CD8-positive, alpha-beta T cell (primary cell): ENCODE measurements at regions of chr19 and their contacts with region 1.

Region 1: DNA sequence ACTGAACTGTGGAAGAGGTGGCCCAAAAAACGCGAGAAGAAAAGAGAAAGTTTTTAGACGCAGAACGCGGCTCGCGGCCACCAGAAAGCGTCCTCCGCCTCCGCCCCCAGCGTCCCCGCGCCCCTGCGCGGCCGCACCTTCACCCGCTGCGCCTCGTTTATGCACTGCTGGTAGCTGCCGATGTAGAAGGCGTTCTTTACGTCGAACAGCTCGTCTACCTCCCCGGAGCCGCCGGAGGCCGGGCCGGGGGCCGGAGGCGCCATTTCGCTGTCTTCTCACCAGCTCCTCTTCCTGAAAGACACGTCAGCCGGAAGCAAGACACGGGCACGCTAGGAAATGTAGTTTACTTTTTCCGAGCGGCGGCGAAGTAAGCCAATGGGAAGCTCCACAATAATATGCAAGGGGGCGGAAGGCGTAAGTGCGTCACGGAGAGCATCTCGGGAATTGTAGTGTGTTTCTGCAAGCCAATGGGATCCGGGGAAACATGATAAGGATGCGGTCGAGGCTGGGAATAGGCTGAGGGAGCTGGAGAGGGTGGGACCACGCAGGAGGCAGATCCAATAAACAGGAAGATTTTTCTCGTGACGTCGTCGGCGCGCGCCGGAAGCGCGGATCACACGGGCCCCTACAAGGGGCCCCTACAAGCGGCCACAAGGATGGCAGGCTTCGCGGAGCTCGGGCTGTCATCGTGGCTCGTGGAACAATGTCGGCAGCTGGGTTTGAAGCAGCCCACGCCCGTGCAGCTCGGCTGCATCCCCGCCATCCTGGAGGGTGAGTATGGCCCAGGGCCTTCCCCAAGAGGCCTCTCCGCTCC is at the starts of genes COPE and DDX49:
- DNase-seq: peak; percentile 92 to 100 (median 98)
- ATAC-seq: peak; percentile 93
- H3K4me3 ChIP-seq: peak within 1 kb of the TSS; percentile 92 to 94
- H3K4me3 Mint-ChIP-seq: peak within 1 kb of the TSS; percentile 93
- H3K27ac ChIP-seq: peak within 1 kb of the TSS; percentile 96 to 97
- H3K27ac Mint-ChIP-seq: peak within 1 kb of the TSS; percentile 94
- H3K4me1 ChIP-seq: peaks cover 30% of the 10 kb centered on the region
- H3K4me1 Mint-ChIP-seq: peaks cover 43% of the 10 kb centered on the region
- H3K27me3 ChIP-seq: no peaks in the 10 kb centered on the region
- H3K27me3 Mint-ChIP-seq: no peaks in the 10 kb centered on the region
- CTCF ChIP-seq: no peak
- total RNA-seq, gene COPE: 207 to 211 TPM
- total RNA-seq, gene DDX49: 67.1 to 72.8 TPM

Region 2: DNA sequence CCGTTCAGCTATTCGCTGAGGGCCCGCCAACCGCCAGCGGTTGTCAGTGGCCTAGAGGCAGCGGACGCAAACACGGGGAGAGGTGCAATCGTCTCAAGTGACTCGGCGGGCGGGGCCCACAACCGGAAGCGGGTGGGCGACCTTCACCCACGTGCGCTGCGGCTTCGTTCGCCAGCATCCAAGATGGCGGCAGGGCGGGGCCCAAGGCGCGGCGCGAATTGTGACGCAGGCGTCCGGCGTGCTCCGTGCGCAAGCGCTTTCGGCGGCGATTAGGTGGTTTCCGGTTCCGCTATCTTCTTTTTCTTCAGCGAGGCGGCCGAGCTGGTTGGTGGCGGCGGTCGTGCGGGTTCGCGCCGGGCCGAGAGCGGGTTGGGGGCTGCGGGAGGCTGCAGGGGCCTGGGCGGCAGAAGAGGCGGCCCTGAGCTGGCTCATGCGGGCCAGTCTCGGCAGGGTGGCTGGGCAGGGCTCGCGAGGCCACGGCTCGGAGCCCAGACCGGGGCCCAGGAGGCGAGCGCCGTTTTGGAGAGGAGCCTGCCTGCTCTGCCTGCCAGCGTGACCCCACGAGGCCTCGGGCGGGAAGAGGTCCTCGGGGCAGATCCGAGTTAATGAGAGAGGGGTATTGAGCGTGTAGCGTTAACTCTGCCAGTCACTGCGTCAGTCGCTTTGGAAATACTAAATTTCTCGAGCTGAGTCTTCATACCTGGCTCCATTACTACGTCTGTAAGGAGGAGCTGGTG is 347.6 kb before region 1 on chr19 and contains the start of gene UBA52:
- CTCF ChIA-PET with region 1: no interaction called
- POLR2A ChIA-PET with region 1: interaction called, 9 read pairs
- intact Hi-C with region 1: loop called (anchors 1 kb)
- DNase-seq: peak; percentile 98 to 100 (median 99)
- ATAC-seq: peak; percentile 91
- H3K4me3 ChIP-seq: peak within 1 kb of the TSS; percentile 94 to 97
- H3K4me3 Mint-ChIP-seq: peak within 1 kb of the TSS; percentile 95
- H3K27ac ChIP-seq: peak within 1 kb of the TSS; percentile 95 to 96
- H3K27ac Mint-ChIP-seq: peak within 1 kb of the TSS; percentile 97
- H3K4me1 ChIP-seq: peaks cover 16% of the 10 kb centered on the region
- H3K4me1 Mint-ChIP-seq: peaks cover 19% of the 10 kb centered on the region
- H3K27me3 ChIP-seq: no peaks in the 10 kb centered on the region
- H3K27me3 Mint-ChIP-seq: no peaks in the 10 kb centered on the region
- CTCF ChIP-seq: no peak
- total RNA-seq, gene UBA52: 2,140 to 2,193 TPM

Region 3: DNA sequence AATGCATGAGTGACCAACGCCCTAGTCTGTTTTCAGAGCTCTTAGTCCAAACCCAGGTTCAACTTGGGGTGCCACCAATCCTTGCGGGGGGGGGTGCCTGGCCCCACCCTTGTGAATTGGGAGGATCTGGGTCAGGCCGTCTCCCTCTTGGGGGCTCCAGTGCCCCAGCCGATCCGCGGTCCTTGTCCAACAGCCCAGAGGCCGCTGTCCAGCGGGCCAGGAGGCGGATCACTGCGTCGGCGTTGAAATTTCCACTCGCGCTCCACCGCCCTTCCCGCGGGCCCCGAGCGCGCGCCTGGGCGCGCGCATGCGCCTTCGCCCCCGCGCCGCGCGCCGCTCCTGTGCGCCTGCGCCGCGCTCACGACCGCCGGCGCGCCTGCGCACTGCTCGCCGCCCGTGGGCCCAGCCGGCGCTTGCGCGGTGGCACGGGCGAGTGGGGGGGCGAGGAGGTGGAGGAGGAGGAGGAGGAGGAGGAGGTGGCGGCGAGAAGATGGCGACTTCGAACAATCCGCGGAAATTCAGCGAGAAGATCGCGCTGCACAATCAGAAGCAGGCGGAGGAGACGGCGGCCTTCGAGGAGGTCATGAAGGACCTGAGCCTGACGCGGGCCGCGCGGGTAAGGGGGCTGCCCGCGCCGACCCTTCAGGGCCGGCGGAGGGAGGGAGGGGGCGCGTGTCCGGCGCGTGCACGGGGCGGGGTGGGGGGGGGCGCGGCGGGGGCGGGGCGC is 235.9 kb before region 1 on chr19 and contains the start of gene CRTC1:
- CTCF ChIA-PET with region 1: no interaction called
- POLR2A ChIA-PET with region 1: no interaction called
- intact Hi-C with region 1: loop called in 1 of 2 experiments (anchors 1 kb)
- DNase-seq: peak; percentile 90 to 97 (median 95)
- ATAC-seq: peak; percentile 90
- H3K4me3 ChIP-seq: peak within 1 kb of the TSS; percentile 63 to 91
- H3K4me3 Mint-ChIP-seq: peak within 1 kb of the TSS; percentile 87
- H3K27ac ChIP-seq: peak within 1 kb of the TSS; percentile 65 to 67
- H3K27ac Mint-ChIP-seq: peak within 1 kb of the TSS; percentile 82
- H3K4me1 ChIP-seq: peaks cover 20% of the 10 kb centered on the region
- H3K4me1 Mint-ChIP-seq: peaks cover 33% of the 10 kb centered on the region
- H3K27me3 ChIP-seq: no peaks in the 10 kb centered on the region
- H3K27me3 Mint-ChIP-seq: no peaks in the 10 kb centered on the region
- CTCF ChIP-seq: no peak
- total RNA-seq, gene CRTC1: 7.1 to 7.5 TPM

Region 4: GRCh38 chr19:18879579-18880373 is 39.5 kb before region 1 on chr19:
- CTCF ChIA-PET with region 1: no interaction called
- POLR2A ChIA-PET with region 1: no interaction called
- intact Hi-C with region 1: no loop called
- DNase-seq: peak in 3 of 9 experiments; percentile 44 to 53 (median 51)
- ATAC-seq: peak; percentile 76
- H3K4me3 ChIP-seq: no peak overlapping the region
- H3K4me3 Mint-ChIP-seq: no peak overlapping the region
- H3K27ac ChIP-seq: no peak overlapping the region
- H3K27ac Mint-ChIP-seq: no peak overlapping the region
- H3K4me1 ChIP-seq: no peaks in the 10 kb centered on the region
- H3K4me1 Mint-ChIP-seq: no peaks in the 10 kb centered on the region
- H3K27me3 ChIP-seq: no peaks in the 10 kb centered on the region
- H3K27me3 Mint-ChIP-seq: no peaks in the 10 kb centered on the region
- CTCF ChIP-seq: no peak

Region 5: GRCh38 chr19:18895038-18895823 is 24.1 kb before region 1 on chr19:
- CTCF ChIA-PET with region 1: no interaction called
- POLR2A ChIA-PET with region 1: no interaction called
- intact Hi-C with region 1: no loop called
- DNase-seq: no peak
- ATAC-seq: no peak
- H3K4me3 ChIP-seq: no peak overlapping the region
- H3K4me3 Mint-ChIP-seq: peak overlapping the region; percentile 29
- H3K27ac ChIP-seq: no peak overlapping the region
- H3K27ac Mint-ChIP-seq: no peak overlapping the region
- H3K4me1 ChIP-seq: peaks cover 7% of the 10 kb centered on the region
- H3K4me1 Mint-ChIP-seq: peaks cover 9% of the 10 kb centered on the region
- H3K27me3 ChIP-seq: peaks cover 7 to 16% of the 10 kb centered on the region in 2 experiments
- H3K27me3 Mint-ChIP-seq: peaks cover 22% of the 10 kb centered on the region
- CTCF ChIP-seq: no peak

Region 6: GRCh38 chr19:18932216-18932841 is 13.0 kb after region 1 on chr19:
- CTCF ChIA-PET with region 1: no interaction called
- POLR2A ChIA-PET with region 1: interaction called, 19 read pairs
- intact Hi-C with region 1: loop called in 1 of 2 experiments (anchors 1 kb)
- DNase-seq: peak; percentile 69 to 87 (median 81)
- ATAC-seq: peak; percentile 96
- H3K4me3 ChIP-seq: peak overlapping the region; percentile 35 to 52
- H3K4me3 Mint-ChIP-seq: peak overlapping the region; percentile 80
- H3K27ac ChIP-seq: no peak overlapping the region
- H3K27ac Mint-ChIP-seq: no peak overlapping the region
- H3K4me1 ChIP-seq: peaks cover 9% of the 10 kb centered on the region
- H3K4me1 Mint-ChIP-seq: peaks cover 5% of the 10 kb centered on the region
- H3K27me3 ChIP-seq: peaks cover 0 to 6% of the 10 kb centered on the region in 2 experiments
- H3K27me3 Mint-ChIP-seq: peaks cover 14% of the 10 kb centered on the region
- CTCF ChIP-seq: no peak

Region 7: DNA sequence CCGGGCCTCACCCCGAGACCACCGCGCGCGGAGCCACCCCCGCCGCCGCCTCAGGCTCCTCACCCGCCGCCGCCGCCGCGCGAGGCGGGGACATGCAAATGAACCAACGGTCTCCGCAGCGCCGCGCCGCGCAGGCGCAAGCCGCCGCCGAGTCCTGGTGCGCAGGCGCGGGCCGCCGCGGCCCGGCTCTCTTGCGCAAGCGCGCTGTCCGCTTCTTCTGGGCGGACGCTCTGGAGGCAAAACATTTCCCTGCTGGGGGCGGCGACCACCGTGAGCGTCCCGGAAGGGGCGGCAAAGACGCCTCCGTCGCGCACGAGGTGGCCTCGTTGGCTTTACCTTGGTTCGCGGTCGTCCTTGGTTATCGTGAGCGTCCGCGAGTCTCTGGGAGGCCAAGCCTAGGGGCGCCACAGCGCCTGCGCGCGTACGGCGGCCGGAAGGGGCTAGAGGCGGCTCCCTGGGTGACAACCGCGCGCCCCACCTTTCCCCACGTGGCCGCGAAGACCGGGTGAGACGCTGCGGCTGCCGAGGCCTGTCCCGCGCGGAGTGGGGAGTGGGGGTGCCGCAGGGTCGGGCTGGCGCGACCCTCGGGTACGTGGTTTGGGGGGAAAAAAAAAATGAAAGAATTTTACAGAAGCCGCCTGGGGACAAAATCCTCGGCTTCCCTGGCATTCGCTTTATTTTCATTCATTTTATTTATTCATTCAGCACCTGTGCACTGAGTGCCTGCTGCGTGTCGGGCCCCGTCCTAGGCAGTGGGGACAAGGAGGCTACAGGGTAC is 114.3 kb after region 1 on chr19 and contains the starts of genes ARMC6 and SUGP2:
- CTCF ChIA-PET with region 1: no interaction called
- POLR2A ChIA-PET with region 1: no interaction called
- intact Hi-C with region 1: loop called in 1 of 2 experiments (anchors 2 kb)
- DNase-seq: peak; percentile 79 to 95 (median 89)
- ATAC-seq: peak; percentile 68
- H3K4me3 ChIP-seq: peak within 1 kb of the TSS; percentile 71 to 81
- H3K4me3 Mint-ChIP-seq: peak within 1 kb of the TSS; percentile 97
- H3K27ac ChIP-seq: peak within 1 kb of the TSS; percentile 65 to 85
- H3K27ac Mint-ChIP-seq: peak within 1 kb of the TSS; percentile 97
- H3K4me1 ChIP-seq: peaks cover 18% of the 10 kb centered on the region
- H3K4me1 Mint-ChIP-seq: peaks cover 33% of the 10 kb centered on the region
- H3K27me3 ChIP-seq: no peaks in the 10 kb centered on the region
- H3K27me3 Mint-ChIP-seq: no peaks in the 10 kb centered on the region
- CTCF ChIP-seq: no peak
- total RNA-seq, gene ARMC6: 4.6 to 5.3 TPM
- total RNA-seq, gene SUGP2: 85.4 to 90.8 TPM

Region 8: GRCh38 chr19:19192078-19192882 is 273.0 kb after region 1 on chr19 and contains the starts of genes BORCS8 and RFXANK:
- CTCF ChIA-PET with region 1: no interaction called
- POLR2A ChIA-PET with region 1: no interaction called
- intact Hi-C with region 1: loop called (anchors 1 kb)
- DNase-seq: peak; percentile 97 to 100 (median 98)
- ATAC-seq: peak; percentile 91
- H3K4me3 ChIP-seq: peak within 1 kb of the TSS; percentile 100
- H3K4me3 Mint-ChIP-seq: peak within 1 kb of the TSS; percentile 96
- H3K27ac ChIP-seq: peak within 1 kb of the TSS; percentile 98 to 100
- H3K27ac Mint-ChIP-seq: peak within 1 kb of the TSS; percentile 98
- H3K4me1 ChIP-seq: peaks cover 36% of the 10 kb centered on the region
- H3K4me1 Mint-ChIP-seq: peaks cover 52% of the 10 kb centered on the region
- H3K27me3 ChIP-seq: no peaks in the 10 kb centered on the region
- H3K27me3 Mint-ChIP-seq: no peaks in the 10 kb centered on the region
- CTCF ChIP-seq: no peak
- total RNA-seq, gene BORCS8: 6.6 to 13.6 TPM
- total RNA-seq, gene RFXANK: 33.4 to 38.8 TPM